GM12878 (cell line): ENCODE measurements at regions of chr1 and their contacts with region 1.

Region 1: DNA sequence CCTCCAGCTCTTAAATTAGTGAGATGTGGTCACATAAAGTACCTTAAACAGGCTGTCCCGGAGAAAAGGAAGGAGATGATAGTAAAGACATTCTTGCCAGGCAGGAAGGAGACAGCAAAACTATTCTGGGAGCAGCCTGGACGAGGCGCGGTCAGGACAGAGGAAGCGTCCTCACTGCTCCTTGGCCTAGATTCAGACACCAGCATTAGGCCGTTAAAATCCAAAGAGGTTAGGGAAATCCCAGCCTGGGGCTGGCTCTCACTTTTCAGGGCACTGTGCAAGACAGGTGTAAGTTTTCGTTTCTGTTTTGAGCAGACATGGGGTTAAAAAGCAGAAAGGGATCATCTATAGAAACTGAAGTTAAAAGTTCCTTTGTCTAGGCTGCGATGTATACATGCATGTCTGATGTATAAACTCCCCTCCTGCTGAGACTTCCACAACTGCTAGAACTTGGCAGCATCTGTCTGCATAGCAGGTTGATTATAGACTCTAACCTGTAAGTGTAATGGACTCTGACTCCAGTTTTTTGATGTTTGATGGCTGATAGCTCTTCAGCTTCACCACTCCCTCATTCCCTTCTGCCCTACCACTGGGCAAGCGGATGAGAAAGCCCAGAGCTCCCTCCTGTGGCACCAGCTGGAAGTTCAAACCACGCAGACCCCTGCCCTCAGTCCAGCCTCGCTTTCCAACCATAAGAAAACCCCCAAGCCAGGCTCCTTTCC is 21.5 kb downstream of the STPG1 start:
- DNase-seq: peak; percentile 84
- ATAC-seq: peak; percentile 89
- H3K4me3 ChIP-seq: peak overlapping the region; percentile 58; the same call in 1 of the 2 replicates
- H3K27ac ChIP-seq: peak overlapping the region; percentile 85
- H3K4me1 ChIP-seq: peaks cover 18% of the 10 kb centered on the region
- H3K27me3 ChIP-seq: no peaks in the 10 kb centered on the region; a peak in 1 of 4 replicates
- CTCF ChIP-seq: peak; percentile 78 to 82 (median 78)
- EP300 ChIP-seq: no peak
- POLR2A ChIP-seq: no peak; the same call in none of the 2 replicates
- RAD21 ChIP-seq: peak; percentile 85

Region 2: GRCh38 chr1:24150234-24151174 is 241.5 kb before region 1 on chr1:
- CTCF ChIA-PET with region 1: interaction called, 134 read pairs
- POLR2A ChIA-PET with region 1: interaction called, 3 read pairs
- RAD21 ChIA-PET with region 1: interaction called, 80 read pairs
- SMC1A ChIA-PET with region 1: interaction called, 104 read pairs
- in situ Hi-C with region 1: no loop called
- intact Hi-C with region 1: loop called (anchors 1 kb)
- DNase-seq: peak; percentile 24
- ATAC-seq: peak; percentile 98
- H3K4me3 ChIP-seq: no peak overlapping the region
- H3K27ac ChIP-seq: no peak overlapping the region
- H3K4me1 ChIP-seq: peaks cover 11% of the 10 kb centered on the region
- H3K27me3 ChIP-seq: peaks cover 3 to 4% of the 10 kb centered on the region in 2 experiments; a peak in 3 of 4 replicates
- CTCF ChIP-seq: peak; percentile 76 to 93 (median 87)
- EP300 ChIP-seq: no peak
- POLR2A ChIP-seq: no peak
- RAD21 ChIP-seq: peak; percentile 91

Region 3: DNA sequence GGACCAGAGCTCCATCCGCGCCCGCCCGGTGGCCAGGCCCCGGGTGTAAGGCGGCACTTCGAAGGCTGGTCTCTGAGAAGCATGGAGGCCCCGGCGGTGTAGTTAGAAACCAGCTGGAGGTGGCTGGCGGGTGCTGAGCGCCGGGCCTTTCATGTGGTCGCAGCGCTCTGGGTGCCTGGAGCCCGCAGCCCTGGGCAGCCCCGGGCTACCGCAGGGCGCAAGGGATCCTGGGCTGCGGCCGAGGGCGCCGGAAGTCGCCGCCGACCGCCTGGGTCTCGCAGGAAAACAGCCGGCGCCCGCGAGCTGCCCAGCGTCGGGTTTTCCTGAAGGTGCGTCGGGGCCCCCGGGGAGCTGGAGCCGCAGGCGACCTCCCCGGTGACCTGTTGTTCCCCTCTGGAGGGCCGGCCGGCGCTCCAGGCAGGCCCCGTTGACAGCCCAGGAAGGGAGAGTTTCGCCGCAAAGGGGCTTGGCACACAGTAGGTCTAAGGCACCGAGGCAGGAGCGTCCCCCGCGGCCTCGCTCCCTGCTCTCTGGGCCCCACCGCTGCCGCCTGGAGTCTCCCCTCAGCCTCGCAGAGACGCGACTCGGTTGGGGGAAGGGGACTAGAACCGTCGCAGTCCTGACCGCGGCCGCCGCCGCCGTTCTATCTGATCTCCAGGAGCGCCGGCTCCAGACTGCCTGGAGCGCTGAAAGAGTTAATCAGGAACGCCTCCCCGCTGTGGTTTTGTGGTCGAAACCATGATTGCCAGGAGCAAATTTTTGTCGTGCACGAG is 70.2 kb before region 1 on chr1:
- CTCF ChIA-PET with region 1: interaction called, 9 read pairs
- POLR2A ChIA-PET with region 1: interaction called, 5 read pairs
- RAD21 ChIA-PET with region 1: interaction called, 11 read pairs
- SMC1A ChIA-PET with region 1: interaction called, 4 read pairs
- in situ Hi-C with region 1: no loop called
- intact Hi-C with region 1: no loop called
- DNase-seq: no peak
- ATAC-seq: peak; percentile 96
- H3K4me3 ChIP-seq: peak overlapping the region; percentile 44; the same call in 1 of the 2 replicates
- H3K27ac ChIP-seq: no peak overlapping the region
- H3K4me1 ChIP-seq: peaks cover 21% of the 10 kb centered on the region
- H3K27me3 ChIP-seq: peaks cover 11 to 27% of the 10 kb centered on the region in 2 experiments
- CTCF ChIP-seq: no peak
- EP300 ChIP-seq: no peak; a peak in 1 of 4 replicates
- POLR2A ChIP-seq: 0 out of 2 replicates have a peak, but pooled peaks have one; percentile 18
- RAD21 ChIP-seq: no peak

Region 4: GRCh38 chr1:24415334-24415909 is 23.4 kb after region 1 on chr1 and contains the start of gene NIPAL3:
- CTCF ChIA-PET with region 1: interaction called, 69 read pairs
- POLR2A ChIA-PET with region 1: interaction called, 9 read pairs
- RAD21 ChIA-PET with region 1: interaction called, 28 read pairs
- SMC1A ChIA-PET with region 1: interaction called, 63 read pairs
- in situ Hi-C with region 1: no loop called
- intact Hi-C with region 1: no loop called
- DNase-seq: peak; percentile 98
- ATAC-seq: peak; percentile 99
- H3K4me3 ChIP-seq: peak within 1 kb of the TSS; percentile 80
- H3K27ac ChIP-seq: 0 out of 2 replicates have a peak within 1 kb of the TSS, but pooled peaks have one; percentile 0
- H3K4me1 ChIP-seq: peaks cover 9% of the 10 kb centered on the region
- H3K27me3 ChIP-seq: no peaks in the 10 kb centered on the region
- CTCF ChIP-seq: peak; percentile 91 to 95 (median 94)
- EP300 ChIP-seq: no peak
- POLR2A ChIP-seq: peak; percentile 40; the same call in 1 of the 2 replicates
- RAD21 ChIP-seq: peak; percentile 49
- polyA plus RNA-seq, gene NIPAL3: 2.1 TPM

Region 5: DNA sequence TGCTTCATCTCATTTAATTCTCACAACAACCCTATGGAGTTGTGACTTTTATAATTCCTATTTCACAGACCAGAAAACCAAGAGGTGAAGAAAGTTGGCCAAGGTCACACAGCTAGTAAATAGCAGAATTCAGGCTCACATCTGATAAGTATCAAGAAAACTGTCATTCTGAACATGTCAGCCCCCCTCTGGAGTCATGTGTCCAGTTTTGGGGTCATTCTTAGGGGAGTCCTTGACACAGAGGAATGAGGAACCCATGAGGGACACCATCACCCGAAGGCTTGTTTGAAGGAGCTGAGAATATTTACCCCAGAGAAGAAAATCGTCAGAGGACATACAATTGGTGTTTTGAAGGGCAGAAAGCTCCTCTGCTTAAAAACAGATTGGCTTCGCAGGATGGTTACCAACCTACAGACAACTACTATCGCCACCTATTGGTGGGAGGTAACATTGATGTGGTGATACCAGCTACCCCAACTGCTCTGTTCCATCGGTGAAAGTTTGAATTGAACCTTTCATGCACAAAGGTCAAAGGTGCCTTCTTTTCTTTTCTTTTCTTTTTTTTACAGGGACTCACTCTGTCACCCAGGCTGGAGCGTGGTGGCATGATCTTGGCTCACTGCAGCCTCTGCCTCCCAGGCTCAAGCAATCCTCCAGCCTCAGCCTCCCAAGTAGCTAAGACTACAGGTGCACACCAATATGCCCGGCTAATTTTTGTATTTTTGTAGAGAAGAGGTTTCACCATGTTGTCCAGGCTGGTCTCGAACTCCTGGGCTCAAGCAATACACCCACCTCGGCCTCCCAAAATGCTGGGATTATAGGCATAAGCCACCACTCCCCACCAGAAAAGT is 195.2 kb after region 1 on chr1:
- CTCF ChIA-PET with region 1: interaction called, 39 read pairs
- POLR2A ChIA-PET with region 1: no interaction called
- RAD21 ChIA-PET with region 1: interaction called, 5 read pairs
- SMC1A ChIA-PET with region 1: interaction called, 5 read pairs
- in situ Hi-C with region 1: no loop called
- intact Hi-C with region 1: loop called (anchors 1 kb)
- DNase-seq: no peak
- ATAC-seq: peak; percentile 98
- H3K4me3 ChIP-seq: no peak overlapping the region
- H3K27ac ChIP-seq: no peak overlapping the region
- H3K4me1 ChIP-seq: no peaks in the 10 kb centered on the region
- H3K27me3 ChIP-seq: peaks cover 2 to 5% of the 10 kb centered on the region in 2 experiments; a peak in 2 of 4 replicates
- CTCF ChIP-seq: peak; percentile 78 to 84 (median 78)
- EP300 ChIP-seq: no peak
- POLR2A ChIP-seq: no peak
- RAD21 ChIP-seq: peak; percentile 75